ENCODE measurements at regions of chr12 and their contacts with region 1.

Region 1: GRCh38 chr12:100682178-100682577 is 108.7 kb downstream of the GAS2L3 start:
- DNase-seq: no peak
- ATAC-seq: no peak
- H3K4me3 Mint-ChIP-seq: no peak overlapping the region
- H3K27ac Mint-ChIP-seq: no peak overlapping the region
- H3K4me1 Mint-ChIP-seq: no peaks in the 10 kb centered on the region
- H3K27me3 Mint-ChIP-seq: no peaks in the 10 kb centered on the region

Region 2: DNA sequence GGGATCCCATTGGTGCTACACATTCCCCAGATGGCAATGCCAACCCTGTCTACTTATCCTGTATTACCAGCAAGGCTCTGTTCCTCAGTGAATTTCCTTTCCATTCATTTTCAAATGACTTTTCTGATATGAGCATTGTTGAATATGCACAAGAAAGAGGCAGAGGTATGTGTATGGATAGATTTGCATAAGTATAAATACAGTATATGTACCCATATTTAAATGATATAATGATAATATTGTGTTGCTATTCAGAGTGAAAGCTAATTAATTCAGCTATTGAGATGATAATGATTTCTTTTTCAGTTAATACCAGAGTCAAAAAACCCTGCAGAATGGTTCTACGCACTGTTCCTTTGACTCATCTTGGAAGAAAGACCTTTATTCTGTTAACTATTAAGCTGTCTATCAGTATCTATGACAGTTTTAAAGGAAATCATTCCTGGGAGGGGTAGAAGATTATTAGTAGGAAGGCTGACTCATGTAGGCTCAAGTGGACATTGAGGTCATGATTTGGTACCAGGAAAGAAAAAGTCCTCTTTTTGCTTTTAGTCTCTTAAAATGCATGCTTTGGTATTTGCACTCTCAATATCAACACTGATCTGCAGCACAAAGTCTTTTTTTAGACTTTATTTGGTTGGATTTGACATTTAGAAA is 153.6 kb before region 1 on chr12:
- CTCF ChIA-PET with region 1: no interaction called
- POLR2A ChIA-PET with region 1: no interaction called
- DNase-seq: no peak
- ATAC-seq: no peak
- H3K4me3 Mint-ChIP-seq: no peak overlapping the region
- H3K27ac Mint-ChIP-seq: no peak overlapping the region
- H3K4me1 Mint-ChIP-seq: no peaks in the 10 kb centered on the region
- H3K27me3 Mint-ChIP-seq: no peaks in the 10 kb centered on the region

Region 3: GRCh38 chr12:100672075-100672592 is 10.0 kb before region 1 on chr12:
- CTCF ChIA-PET with region 1: interaction called, 10 read pairs
- POLR2A ChIA-PET with region 1: no interaction called
- DNase-seq: peak; percentile 42
- ATAC-seq: peak; percentile 55
- H3K4me3 Mint-ChIP-seq: no peak overlapping the region
- H3K27ac Mint-ChIP-seq: no peak overlapping the region
- H3K4me1 Mint-ChIP-seq: no peaks in the 10 kb centered on the region
- H3K27me3 Mint-ChIP-seq: no peaks in the 10 kb centered on the region

Region 4: GRCh38 chr12:100753837-100754236 is 71.7 kb after region 1 on chr12:
- CTCF ChIA-PET with region 1: no interaction called
- POLR2A ChIA-PET with region 1: no interaction called
- DNase-seq: no peak
- ATAC-seq: no peak
- H3K4me3 Mint-ChIP-seq: no peak overlapping the region
- H3K27ac Mint-ChIP-seq: no peak overlapping the region
- H3K4me1 Mint-ChIP-seq: no peaks in the 10 kb centered on the region
- H3K27me3 Mint-ChIP-seq: no peaks in the 10 kb centered on the region

Region 5: GRCh38 chr12:100842156-100842555 is 160.0 kb after region 1 on chr12:
- CTCF ChIA-PET with region 1: no interaction called
- POLR2A ChIA-PET with region 1: no interaction called
- DNase-seq: no peak
- ATAC-seq: no peak
- H3K4me3 Mint-ChIP-seq: no peak overlapping the region
- H3K27ac Mint-ChIP-seq: no peak overlapping the region
- H3K4me1 Mint-ChIP-seq: no peaks in the 10 kb centered on the region
- H3K27me3 Mint-ChIP-seq: no peaks in the 10 kb centered on the region